MCF 10A (cell line): ENCODE measurements at regions of chr3 and their contacts with region 1.

Region 1: DNA sequence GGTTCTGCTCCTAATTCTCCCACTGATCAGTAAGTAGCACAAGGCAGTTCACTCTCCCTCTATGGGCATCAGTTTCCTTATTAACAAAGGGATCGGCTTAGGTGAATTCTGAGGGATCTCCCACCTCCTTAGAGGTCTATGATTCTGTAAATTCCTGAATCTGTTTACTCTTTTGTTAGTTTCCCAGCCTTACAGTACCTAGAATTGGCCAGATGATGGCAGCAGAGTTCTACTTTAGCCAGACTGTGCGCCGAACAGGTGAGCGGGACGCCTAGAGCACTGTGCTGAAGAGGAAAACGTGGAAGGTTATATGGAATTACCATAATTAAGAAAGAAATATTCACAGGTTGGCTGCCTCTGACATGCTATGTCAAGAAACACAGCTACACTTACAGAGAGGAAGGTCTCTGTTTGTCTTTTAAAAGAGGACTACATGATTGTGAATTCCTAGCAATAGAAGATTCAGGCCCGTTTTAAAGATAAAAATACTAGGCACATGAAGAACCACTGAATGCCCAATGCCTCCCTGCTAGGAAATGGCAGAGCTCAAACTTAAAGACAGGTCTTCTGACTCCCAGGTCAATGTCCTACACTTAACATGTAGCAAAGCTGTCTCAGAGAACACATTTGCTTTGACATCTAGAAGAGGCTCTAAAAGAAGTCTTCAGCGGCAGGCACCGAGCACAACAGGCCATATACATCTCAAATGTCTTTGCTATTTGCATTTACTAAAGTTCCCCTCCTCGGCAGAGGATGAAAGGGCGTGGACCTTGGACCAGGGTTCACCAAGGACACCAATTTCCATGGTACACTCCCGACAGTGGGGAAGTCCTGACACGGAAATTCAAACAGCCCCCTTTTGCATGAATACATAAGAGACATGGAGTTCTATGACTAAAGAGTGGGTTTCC is 259.9 kb downstream of the FGF12 start:
- DNase-seq: peak; percentile 72
- H3K4me3 Mint-ChIP-seq: no peak overlapping the region
- H3K27ac Mint-ChIP-seq: no peak overlapping the region
- H3K4me1 Mint-ChIP-seq: no peaks in the 10 kb centered on the region
- H3K27me3 Mint-ChIP-seq: peaks cover 82% of the 10 kb centered on the region
- CTCF ChIP-seq: peak; percentile 94

Region 2: DNA sequence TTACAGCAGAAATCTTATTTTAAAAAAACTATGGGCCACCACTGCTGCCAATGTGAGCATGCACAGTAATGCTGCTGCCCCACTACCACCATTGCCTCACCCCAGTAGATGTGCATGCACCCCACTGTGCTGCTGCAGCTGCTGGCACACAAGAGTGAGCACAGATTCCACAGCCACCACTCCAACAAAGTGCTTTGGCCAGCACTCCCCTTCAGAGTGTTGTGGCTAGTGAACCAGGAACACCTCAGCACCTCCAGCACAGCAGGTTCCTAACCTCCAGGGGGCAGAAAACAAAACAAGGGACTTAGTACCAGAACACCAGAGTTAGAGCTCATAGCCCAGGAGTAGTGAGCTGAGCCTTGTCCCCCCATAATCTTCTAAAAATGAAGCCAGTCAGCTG is 376.9 kb before region 1 on chr3:
- CTCF ChIA-PET with region 1: no interaction called
- POLR2A ChIA-PET with region 1: no interaction called
- intact Hi-C with region 1: no loop called
- DNase-seq: peak; percentile 15
- H3K4me3 Mint-ChIP-seq: no peak overlapping the region
- H3K27ac Mint-ChIP-seq: peak overlapping the region; percentile 68
- H3K4me1 Mint-ChIP-seq: peaks cover 23% of the 10 kb centered on the region
- H3K27me3 Mint-ChIP-seq: no peaks in the 10 kb centered on the region
- CTCF ChIP-seq: no peak

Region 3: DNA sequence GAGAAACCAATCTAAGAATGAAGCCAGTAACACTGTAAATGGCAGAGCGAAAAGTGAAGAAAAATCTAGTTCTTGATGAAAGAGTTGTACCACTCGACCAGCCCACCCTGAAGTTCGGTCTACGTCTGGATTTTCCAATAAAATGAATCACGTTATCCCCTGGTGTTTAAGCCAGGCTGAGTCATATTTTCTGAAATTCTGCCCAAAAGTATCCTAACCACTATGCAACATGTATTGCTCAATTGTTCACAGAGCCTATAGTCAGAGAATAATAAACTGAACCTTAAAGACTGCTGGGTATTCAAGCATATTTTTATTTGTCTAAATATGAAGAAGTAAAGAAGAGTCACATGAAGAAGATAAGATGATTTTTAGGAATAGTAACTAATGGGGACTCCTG is 14.2 kb after region 1 on chr3:
- CTCF ChIA-PET with region 1: interaction called, 10 read pairs
- POLR2A ChIA-PET with region 1: no interaction called
- intact Hi-C with region 1: no loop called
- DNase-seq: peak; percentile 91
- H3K4me3 Mint-ChIP-seq: no peak overlapping the region
- H3K27ac Mint-ChIP-seq: no peak overlapping the region
- H3K4me1 Mint-ChIP-seq: peaks cover 20% of the 10 kb centered on the region
- H3K27me3 Mint-ChIP-seq: peaks cover 30% of the 10 kb centered on the region
- CTCF ChIP-seq: no peak

Region 4: DNA sequence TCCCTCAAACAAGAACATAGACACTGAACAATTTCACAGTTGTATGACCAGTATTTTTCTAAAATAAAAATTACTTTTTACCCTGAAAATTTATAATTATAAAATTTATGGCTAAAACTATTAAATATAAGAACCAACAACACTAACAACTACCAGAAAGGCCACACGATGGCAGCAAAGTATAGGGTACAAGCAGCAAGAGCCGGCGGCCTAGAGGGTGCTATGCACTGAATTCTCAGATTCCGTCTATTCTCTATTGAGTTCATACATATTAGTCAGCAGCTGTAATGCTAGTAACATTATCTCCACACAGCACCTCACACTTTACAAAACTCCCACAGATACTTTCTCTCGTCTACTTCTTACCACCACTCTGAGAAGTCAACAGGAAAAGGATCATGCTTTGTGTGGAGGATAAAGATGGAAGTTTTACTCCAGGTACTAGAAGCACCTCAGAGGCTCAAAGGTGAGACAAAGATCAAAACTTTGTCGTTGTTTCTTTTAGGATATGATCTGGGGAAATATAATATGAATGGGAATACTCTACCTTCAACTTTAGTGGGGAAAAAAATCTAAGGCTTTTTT is 99.3 kb after region 1 on chr3:
- CTCF ChIA-PET with region 1: interaction called, 11 read pairs
- POLR2A ChIA-PET with region 1: interaction called, 3 read pairs
- intact Hi-C with region 1: loop called (anchors 1 kb)
- DNase-seq: peak; percentile 74
- H3K4me3 Mint-ChIP-seq: no peak overlapping the region
- H3K27ac Mint-ChIP-seq: no peak overlapping the region
- H3K4me1 Mint-ChIP-seq: no peaks in the 10 kb centered on the region
- H3K27me3 Mint-ChIP-seq: peaks cover 37% of the 10 kb centered on the region
- CTCF ChIP-seq: peak; percentile 78

Region 5: DNA sequence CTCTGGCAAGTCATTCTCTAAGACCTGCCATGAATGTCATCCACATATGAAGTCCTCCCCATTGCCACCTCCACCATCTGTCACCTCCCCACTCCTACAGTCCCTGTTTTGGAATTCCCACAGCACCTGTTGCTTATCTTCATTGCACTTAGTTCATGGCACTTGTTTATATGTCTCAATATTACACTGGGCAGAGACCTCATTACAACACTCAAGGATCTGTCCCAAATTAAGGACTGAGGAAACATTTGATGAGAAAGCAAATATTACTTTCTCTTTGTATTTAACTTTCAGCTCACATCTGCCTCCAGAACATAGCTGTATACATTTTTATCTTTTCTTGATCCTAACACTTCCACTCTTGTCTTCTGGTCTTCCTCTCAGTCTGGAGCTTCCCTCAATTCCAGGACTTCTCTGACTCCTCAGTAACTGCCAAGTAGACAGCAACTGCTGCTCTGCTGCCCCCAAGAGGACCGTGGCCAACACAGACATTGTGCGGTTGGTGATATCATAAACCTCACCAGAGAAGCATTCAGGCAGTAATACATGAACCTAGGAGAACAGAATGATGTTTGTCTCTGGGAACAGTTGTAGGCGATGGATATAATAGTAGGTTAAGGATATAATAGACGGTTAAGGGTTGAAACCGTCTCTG is 304.9 kb after region 1 on chr3:
- CTCF ChIA-PET with region 1: interaction called, 5 read pairs
- POLR2A ChIA-PET with region 1: no interaction called
- intact Hi-C with region 1: loop called (anchors 1 kb)
- DNase-seq: peak; percentile 49
- H3K4me3 Mint-ChIP-seq: no peak overlapping the region
- H3K27ac Mint-ChIP-seq: no peak overlapping the region
- H3K4me1 Mint-ChIP-seq: no peaks in the 10 kb centered on the region
- H3K27me3 Mint-ChIP-seq: peaks cover 26% of the 10 kb centered on the region
- CTCF ChIP-seq: peak; percentile 39

Region 6: GRCh38 chr3:192802957-192803899 is 335.7 kb after region 1 on chr3:
- CTCF ChIA-PET with region 1: interaction called, 122 read pairs
- POLR2A ChIA-PET with region 1: no interaction called
- intact Hi-C with region 1: loop called (anchors 1 kb)
- DNase-seq: peak; percentile 49
- H3K4me3 Mint-ChIP-seq: no peak overlapping the region
- H3K27ac Mint-ChIP-seq: no peak overlapping the region
- H3K4me1 Mint-ChIP-seq: no peaks in the 10 kb centered on the region
- H3K27me3 Mint-ChIP-seq: no peaks in the 10 kb centered on the region
- CTCF ChIP-seq: peak; percentile 44